GM10248 (cell line): ENCODE measurements at regions of chr5 and their contacts with region 1.

Region 1: DNA sequence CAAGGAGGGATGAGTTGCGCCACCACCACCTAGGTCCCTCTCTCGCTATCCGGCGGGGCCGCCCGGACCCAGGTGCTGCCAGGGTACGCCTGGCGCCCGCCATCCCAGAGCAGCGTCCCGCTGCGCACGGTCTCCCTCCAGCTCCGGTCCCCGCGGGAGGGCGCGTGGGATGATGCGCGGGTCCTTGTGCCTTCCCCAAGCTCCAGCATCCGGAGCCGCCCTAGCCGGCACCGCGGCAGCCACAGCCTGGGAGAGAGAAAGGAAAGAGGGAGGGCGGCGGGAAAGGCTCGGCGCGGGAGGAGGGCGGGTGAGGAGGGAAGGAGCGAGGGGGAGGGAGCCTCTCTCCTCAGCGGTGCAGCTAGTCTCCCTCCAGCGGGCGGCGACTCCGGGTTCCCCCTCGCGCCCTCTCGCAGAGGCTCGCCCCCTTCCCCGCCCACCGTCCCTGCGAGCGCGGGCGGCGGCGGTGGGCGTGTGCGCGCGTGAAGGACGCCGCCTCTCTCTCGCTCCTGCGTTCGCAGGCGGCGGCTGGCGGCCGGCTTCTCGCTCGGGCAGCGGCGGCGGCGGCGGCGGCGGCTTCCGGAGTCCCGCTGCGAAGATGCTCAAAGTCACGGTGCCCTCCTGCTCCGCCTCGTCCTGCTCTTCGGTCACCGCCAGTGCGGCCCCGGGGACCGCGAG is at the start of gene CAMK4:
- DNase-seq: peak; percentile 87
- CTCF ChIP-seq: peak; percentile 34

Region 2: DNA sequence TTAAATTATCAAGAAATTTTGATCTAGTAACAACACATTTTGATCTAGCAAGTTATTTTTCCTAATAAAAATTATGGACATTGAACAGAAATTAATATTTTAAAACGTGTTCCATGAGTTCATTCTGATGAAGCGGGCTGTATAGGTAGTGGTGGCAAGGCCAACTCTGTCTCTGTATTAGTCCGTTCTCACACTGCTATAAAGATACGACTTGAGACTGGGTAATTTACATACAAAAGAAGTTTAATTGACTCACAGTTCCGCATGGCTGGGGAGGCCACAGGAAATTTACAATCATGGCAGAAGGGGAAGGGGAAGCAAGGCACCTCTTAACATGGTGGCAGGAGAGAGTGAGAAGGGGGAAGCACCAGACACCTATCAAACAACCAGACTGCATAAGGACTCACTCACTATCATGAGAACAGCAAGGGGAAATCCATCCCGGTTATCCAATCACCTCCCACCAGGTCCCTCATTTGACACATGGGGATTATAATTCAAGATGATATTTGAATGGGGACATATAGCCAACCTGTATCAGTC is 558.8 kb before region 1 on chr5:
- CTCF ChIA-PET with region 1: no interaction called
- POLR2A ChIA-PET with region 1: no interaction called
- DNase-seq: no peak
- CTCF ChIP-seq: no peak

Region 3: DNA sequence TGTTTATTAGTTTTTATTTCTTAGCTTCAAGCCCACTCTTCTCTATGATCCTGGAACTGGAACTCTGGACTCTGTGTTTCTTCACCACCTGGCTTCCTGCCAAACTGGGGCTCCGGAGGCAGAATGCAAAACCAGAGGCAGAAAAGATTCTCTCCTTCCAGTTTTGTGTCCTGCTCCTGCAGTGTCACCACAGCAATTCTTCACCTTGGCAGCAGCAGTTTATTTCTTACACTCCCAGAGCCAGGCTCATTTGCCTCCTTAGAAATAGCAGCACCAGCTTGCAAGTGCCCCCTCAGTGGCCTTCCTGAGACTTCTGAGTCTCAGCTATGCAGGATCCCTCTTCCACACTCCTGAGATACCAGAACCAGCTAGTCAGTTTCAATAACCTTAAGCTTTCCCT is 26.5 kb before region 1 on chr5:
- CTCF ChIA-PET with region 1: interaction called, 24 read pairs
- POLR2A ChIA-PET with region 1: no interaction called
- DNase-seq: no peak
- CTCF ChIP-seq: no peak

Region 4: DNA sequence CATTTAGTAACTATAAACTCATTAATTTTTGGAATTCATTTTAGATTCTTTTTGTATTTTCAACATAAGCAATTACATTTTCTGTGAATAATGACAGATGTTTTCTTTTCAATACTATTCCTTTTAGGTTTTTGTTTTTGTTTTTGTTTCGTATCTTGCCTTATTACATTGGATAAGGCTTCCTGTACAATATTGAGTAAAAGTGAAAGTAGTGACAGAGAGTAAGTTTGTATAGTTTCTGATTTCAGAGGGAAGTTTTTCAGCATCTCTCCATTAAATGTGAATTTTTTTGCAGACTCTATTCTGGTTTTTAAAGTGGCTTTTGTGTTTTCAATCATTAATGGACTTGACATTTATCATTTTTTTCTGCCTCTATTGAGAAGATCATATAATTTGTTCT is 12.7 kb before region 1 on chr5:
- CTCF ChIA-PET with region 1: interaction called, 14 read pairs
- POLR2A ChIA-PET with region 1: no interaction called
- DNase-seq: no peak
- CTCF ChIP-seq: no peak

Region 5: GRCh38 chr5:111248571-111248970 is 24.5 kb after region 1 on chr5:
- CTCF ChIA-PET with region 1: interaction called, 39 read pairs
- POLR2A ChIA-PET with region 1: interaction called, 3 read pairs
- DNase-seq: no peak
- CTCF ChIP-seq: no peak

Region 6: GRCh38 chr5:111254613-111255012 is 30.6 kb after region 1 on chr5:
- CTCF ChIA-PET with region 1: interaction called, 26 read pairs
- POLR2A ChIA-PET with region 1: interaction called, 3 read pairs
- DNase-seq: peak; percentile 64
- CTCF ChIP-seq: no peak